Caco-2 (cell line): ENCODE measurements at regions of chr5 and their contacts with region 1.

Region 1: GRCh38 chr5:16540421-16540820 is 74.8 kb upstream of the ZNF622 start:
- DNase-seq: no peak
- H3K4me3 ChIP-seq: no peak overlapping the region
- H3K4me3 Mint-ChIP-seq: no peak overlapping the region
- H3K27ac Mint-ChIP-seq: peak overlapping the region; percentile 16
- H3K4me1 ChIP-seq: peaks cover 52% of the 10 kb centered on the region
- H3K4me1 Mint-ChIP-seq: peaks cover 43% of the 10 kb centered on the region
- H3K27me3 ChIP-seq: no peaks in the 10 kb centered on the region
- H3K27me3 Mint-ChIP-seq: no peaks in the 10 kb centered on the region
- CTCF ChIP-seq: no peak

Region 2: DNA sequence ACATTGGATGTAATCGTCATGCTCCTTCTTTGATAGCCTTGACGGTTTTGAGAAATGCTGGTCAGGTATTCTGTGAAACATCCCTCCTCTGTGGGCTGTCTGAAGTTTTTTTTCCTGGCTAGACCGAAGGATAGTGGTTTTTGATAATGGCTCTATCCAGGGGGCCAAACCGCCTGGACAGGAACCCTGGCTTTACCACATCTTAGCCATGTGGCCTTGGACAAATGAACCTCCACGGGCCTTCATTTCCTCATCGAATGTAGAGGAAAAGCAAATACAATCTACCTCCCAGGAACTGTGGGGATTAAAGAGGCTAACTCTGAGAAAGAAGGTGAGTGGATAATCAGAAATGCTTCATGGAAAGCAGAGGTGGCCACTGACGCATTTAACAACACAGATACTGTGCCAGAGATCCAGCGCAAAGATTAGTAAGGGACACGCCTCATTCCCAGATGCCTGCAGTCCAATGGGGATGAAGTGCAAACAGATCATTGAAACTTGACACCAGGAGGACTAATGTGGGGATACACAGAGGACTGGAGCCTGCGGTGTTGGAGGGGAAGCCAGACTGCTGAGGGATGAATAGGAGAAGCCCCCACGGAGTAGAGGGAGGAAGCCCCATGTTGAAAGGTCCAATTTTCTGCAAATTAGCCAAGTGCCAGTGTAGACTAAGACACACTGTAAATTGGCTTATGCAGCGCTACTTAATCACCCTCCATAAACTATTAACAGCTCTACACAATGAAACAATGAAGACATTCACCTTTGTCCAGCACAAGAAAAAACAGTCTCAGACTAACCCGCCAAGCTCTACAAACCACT is 354.0 kb after region 1 on chr5:
- CTCF ChIA-PET with region 1: no interaction called
- POLR2A ChIA-PET with region 1: no interaction called
- intact Hi-C with region 1: loop called (anchors 10 kb)
- DNase-seq: peak; percentile 81 to 87
- H3K4me3 ChIP-seq: peak overlapping the region; percentile 5; the same call in 1 of the 2 replicates
- H3K4me3 Mint-ChIP-seq: peak overlapping the region; percentile 66
- H3K27ac Mint-ChIP-seq: peak overlapping the region; percentile 88
- H3K4me1 ChIP-seq: peaks cover 90% of the 10 kb centered on the region
- H3K4me1 Mint-ChIP-seq: peaks cover 70% of the 10 kb centered on the region
- H3K27me3 ChIP-seq: no peaks in the 10 kb centered on the region
- H3K27me3 Mint-ChIP-seq: no peaks in the 10 kb centered on the region
- CTCF ChIP-seq: no peak